Mammary epithelial cell (primary cell): ENCODE measurements at regions of chr3 and their contacts with region 1.

Region 1: GRCh38 chr3:45145681-45146614 is at the start of gene CDCP1:
- DNase-seq: peak; percentile 74
- H3K4me3 ChIP-seq: peak within 1 kb of the TSS; percentile 68 to 98 (median 97)
- H3K27ac ChIP-seq: peak within 1 kb of the TSS; percentile 95
- H3K4me1 ChIP-seq: peaks cover 33% of the 10 kb centered on the region
- H3K27me3 ChIP-seq: no peaks in the 10 kb centered on the region
- CTCF ChIP-seq: no peak
- total RNA-seq, gene CDCP1: 126 to 271 TPM

Region 2: DNA sequence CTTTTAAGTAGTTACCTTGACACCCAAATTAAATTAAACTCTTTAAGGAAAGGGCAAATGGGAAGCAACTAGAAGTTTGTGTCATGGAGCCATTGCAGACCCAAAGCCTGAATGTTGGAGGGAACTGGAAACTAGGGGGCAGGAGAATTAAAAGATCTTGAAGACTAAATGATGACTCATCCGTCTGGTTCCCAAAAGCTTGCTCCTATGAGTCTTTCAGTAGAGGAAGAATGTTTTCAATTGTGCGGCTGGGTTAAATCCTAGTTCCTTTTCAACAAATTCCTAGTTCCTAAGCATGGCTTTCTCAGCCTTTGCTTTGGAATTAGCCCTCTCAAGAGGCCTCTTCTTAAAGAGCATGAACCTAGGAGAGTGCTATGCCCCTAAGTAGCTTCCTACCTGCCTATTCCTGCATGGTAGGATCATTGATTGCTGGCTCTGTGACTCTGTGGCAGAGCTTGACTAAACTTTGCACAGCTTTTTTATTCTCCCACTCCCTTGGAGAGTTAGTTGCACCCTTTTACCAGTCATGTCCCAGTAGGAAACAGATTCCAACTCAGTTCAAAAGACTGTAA is 102.1 kb before region 1 on chr3:
- CTCF ChIA-PET with region 1: no interaction called
- dilution Hi-C with region 1: no loop called
- in situ Hi-C with region 1: no loop called
- intact Hi-C with region 1: loop called (anchors 5 kb)
- DNase-seq: peak; percentile 68
- H3K4me3 ChIP-seq: no peak overlapping the region
- H3K27ac ChIP-seq: no peak overlapping the region
- H3K4me1 ChIP-seq: peaks cover 13% of the 10 kb centered on the region
- H3K27me3 ChIP-seq: no peaks in the 10 kb centered on the region
- CTCF ChIP-seq: peak in 1 of 2 donors; percentile 19

Region 3: GRCh38 chr3:45167011-45167911 is 21.3 kb after region 1 on chr3:
- CTCF ChIA-PET with region 1: no interaction called
- dilution Hi-C with region 1: no loop called
- in situ Hi-C with region 1: no loop called
- intact Hi-C with region 1: loop called (anchors 2 kb)
- DNase-seq: peak; percentile 98
- H3K4me3 ChIP-seq: no peak overlapping the region
- H3K27ac ChIP-seq: peak overlapping the region; percentile 96
- H3K4me1 ChIP-seq: peaks cover 25% of the 10 kb centered on the region
- H3K27me3 ChIP-seq: no peaks in the 10 kb centered on the region
- CTCF ChIP-seq: no peak

Region 4: GRCh38 chr3:45205126-45205525 is 59.2 kb after region 1 on chr3:
- CTCF ChIA-PET with region 1: no interaction called
- dilution Hi-C with region 1: no loop called
- in situ Hi-C with region 1: loop called in 1 of 2 experiments (anchors 5 kb)
- intact Hi-C with region 1: loop called (anchors 1 kb)
- DNase-seq: peak; percentile 46
- H3K4me3 ChIP-seq: no peak overlapping the region
- H3K27ac ChIP-seq: peak overlapping the region; percentile 1
- H3K4me1 ChIP-seq: peaks cover 43% of the 10 kb centered on the region
- H3K27me3 ChIP-seq: no peaks in the 10 kb centered on the region
- CTCF ChIP-seq: no peak

Region 5: GRCh38 chr3:45333549-45333948 is 187.6 kb after region 1 on chr3:
- CTCF ChIA-PET with region 1: no interaction called
- dilution Hi-C with region 1: no loop called
- in situ Hi-C with region 1: no loop called
- intact Hi-C with region 1: no loop called
- DNase-seq: no peak
- H3K4me3 ChIP-seq: no peak overlapping the region
- H3K27ac ChIP-seq: no peak overlapping the region
- H3K4me1 ChIP-seq: no peaks in the 10 kb centered on the region
- H3K27me3 ChIP-seq: peaks cover 2% of the 10 kb centered on the region
- CTCF ChIP-seq: no peak